Activated CD4-positive, alpha-beta T cell treated with anti-CD3 and anti-CD28 coated beads for 36 hours (primary cell): ENCODE measurements at regions of chr12 and their contacts with region 1.

Region 1: GRCh38 chr12:32365473-32366064 is 33.8 kb upstream of the FGD4 start:
- DNase-seq: peak; percentile 64
- ATAC-seq: peak; percentile 49
- H3K4me3 Mint-ChIP-seq: no peak overlapping the region
- H3K27ac Mint-ChIP-seq: no peak overlapping the region
- H3K4me1 Mint-ChIP-seq: no peaks in the 10 kb centered on the region
- H3K27me3 Mint-ChIP-seq: no peaks in the 10 kb centered on the region

Region 2: DNA sequence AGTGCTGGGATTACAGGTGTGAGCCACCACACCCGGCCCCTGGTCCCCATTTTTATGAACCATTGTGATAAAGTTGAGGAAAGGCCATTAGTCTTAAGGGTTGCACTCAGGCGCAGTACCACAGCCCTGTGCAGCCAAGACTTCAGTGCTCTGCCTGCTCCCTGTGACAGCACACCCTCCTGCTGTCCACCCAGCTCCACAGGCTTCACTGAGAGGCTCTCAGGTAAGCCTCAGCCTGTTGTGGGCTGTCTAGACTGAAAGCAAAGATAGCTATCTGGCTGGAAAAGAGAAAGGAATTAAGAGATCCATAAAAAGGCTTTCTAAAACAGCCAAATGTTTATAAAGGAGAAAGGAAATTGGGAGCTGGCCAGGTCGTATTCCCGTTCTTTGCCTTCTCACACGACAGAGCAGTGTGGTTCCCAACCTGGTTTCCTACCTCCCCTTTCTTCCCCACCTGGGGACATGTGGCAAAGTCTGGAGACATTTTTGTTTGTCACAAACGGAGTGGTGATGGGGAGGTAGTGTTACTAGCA is 294.4 kb after region 1 on chr12:
- CTCF ChIA-PET with region 1: interaction called, 3 read pairs
- POLR2A ChIA-PET with region 1: no interaction called
- intact Hi-C with region 1: loop called in 1 of 2 experiments (anchors 5 kb)
- DNase-seq: no peak
- ATAC-seq: no peak
- H3K4me3 Mint-ChIP-seq: no peak overlapping the region
- H3K27ac Mint-ChIP-seq: no peak overlapping the region
- H3K4me1 Mint-ChIP-seq: peaks cover 4% of the 10 kb centered on the region
- H3K27me3 Mint-ChIP-seq: no peaks in the 10 kb centered on the region

Region 3: GRCh38 chr12:34022079-34022830 is 1656.7 kb after region 1 on chr12 and contains the start of gene ALG10:
- CTCF ChIA-PET with region 1: interaction called, 3 read pairs
- POLR2A ChIA-PET with region 1: no interaction called
- intact Hi-C with region 1: loop called (anchors 5 kb)
- DNase-seq: peak; percentile 97
- ATAC-seq: peak; percentile 100
- H3K4me3 Mint-ChIP-seq: peak within 1 kb of the TSS; percentile 96
- H3K27ac Mint-ChIP-seq: peak within 1 kb of the TSS; percentile 98
- H3K4me1 Mint-ChIP-seq: peaks cover 27% of the 10 kb centered on the region
- H3K27me3 Mint-ChIP-seq: no peaks in the 10 kb centered on the region
- total RNA-seq, gene ALG10: 22.6 to 25.1 TPM